A673 (cell line): ENCODE measurements at regions of chr1 and their contacts with region 1.

Region 1: GRCh38 chr1:20867847-20868246 is 80.7 kb upstream of the HP1BP3 start:
- DNase-seq: no peak
- H3K4me3 ChIP-seq: no peak overlapping the region
- H3K27ac ChIP-seq: no peak overlapping the region
- H3K4me1 ChIP-seq: no peaks in the 10 kb centered on the region
- H3K27me3 ChIP-seq: no peaks in the 10 kb centered on the region
- CTCF ChIP-seq: no peak

Region 2: DNA sequence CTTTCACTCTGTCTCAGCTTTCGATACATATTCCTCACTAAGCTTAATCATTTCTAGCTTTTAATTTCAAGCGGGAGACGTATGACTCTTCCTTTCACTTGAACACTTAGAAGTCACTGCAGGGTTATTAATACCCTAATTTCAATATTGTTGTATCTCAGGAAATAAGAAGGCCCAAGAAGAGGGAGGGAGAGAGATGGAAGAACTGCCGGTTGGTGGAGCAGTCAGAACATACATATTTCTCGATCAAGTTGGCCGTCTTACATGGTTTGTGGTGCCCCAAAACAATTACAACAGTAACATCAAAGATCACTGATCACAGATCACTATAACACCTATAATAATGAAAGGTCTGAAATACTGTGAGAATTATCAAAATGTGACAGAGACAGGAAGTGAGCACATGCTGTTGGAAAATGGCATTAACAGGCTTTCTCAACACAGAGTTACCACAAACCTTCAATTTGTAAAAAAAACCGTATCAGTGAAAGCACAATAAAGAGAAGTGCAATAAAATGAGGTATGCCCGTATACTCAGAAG is 64.7 kb after region 1 on chr1:
- CTCF ChIA-PET with region 1: no interaction called
- POLR2A ChIA-PET with region 1: no interaction called
- intact Hi-C with region 1: no loop called
- DNase-seq: no peak
- H3K4me3 ChIP-seq: no peak overlapping the region
- H3K27ac ChIP-seq: no peak overlapping the region
- H3K4me1 ChIP-seq: no peaks in the 10 kb centered on the region
- H3K27me3 ChIP-seq: no peaks in the 10 kb centered on the region
- CTCF ChIP-seq: no peak

Region 3: DNA sequence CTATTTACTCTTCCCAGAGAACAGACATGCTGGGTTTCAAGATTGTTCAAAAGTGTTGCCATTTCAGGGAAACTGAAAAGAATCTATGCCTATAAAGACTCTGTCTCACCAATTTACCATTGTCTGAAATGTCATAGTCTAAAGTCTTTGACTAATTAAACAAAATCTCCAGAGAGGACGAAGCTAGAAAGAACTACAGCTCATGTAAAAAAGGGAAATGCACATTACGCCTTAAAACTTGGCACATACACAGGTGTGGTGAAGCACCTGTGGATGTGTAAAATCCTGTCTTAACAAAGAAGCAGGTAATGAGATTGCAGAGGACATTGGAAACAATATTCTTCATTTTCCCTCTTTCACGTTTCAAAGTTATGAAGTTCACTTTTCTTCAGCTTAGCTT is 178.3 kb after region 1 on chr1:
- CTCF ChIA-PET with region 1: interaction called, 12 read pairs
- POLR2A ChIA-PET with region 1: no interaction called
- intact Hi-C with region 1: no loop called
- DNase-seq: no peak
- H3K4me3 ChIP-seq: no peak overlapping the region
- H3K27ac ChIP-seq: no peak overlapping the region
- H3K4me1 ChIP-seq: peaks cover 20% of the 10 kb centered on the region
- H3K27me3 ChIP-seq: no peaks in the 10 kb centered on the region
- CTCF ChIP-seq: no peak

Region 4: DNA sequence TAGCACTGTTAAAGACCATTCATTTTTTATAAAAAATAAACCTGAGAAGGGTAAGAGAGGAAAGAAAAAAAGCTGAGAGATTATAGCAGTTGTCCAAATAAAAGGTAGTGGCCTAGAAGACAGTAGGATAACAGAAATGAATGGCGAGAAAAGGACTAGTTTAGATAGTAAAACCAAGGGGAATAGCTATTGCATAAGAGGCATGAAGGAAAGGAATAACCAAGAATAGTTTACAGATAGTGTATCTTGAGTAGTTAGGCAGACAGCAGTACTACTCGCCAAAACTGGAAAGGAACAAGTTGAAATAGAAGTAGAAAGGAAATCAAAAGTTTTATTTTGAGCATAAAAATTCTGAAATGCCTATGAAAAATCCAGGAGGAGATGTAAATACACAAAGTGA is 238.4 kb after region 1 on chr1:
- CTCF ChIA-PET with region 1: no interaction called
- POLR2A ChIA-PET with region 1: interaction called, 24 read pairs
- intact Hi-C with region 1: no loop called
- DNase-seq: no peak
- H3K4me3 ChIP-seq: no peak overlapping the region
- H3K27ac ChIP-seq: no peak overlapping the region
- H3K4me1 ChIP-seq: peaks cover 14% of the 10 kb centered on the region
- H3K27me3 ChIP-seq: no peaks in the 10 kb centered on the region
- CTCF ChIP-seq: no peak